PC-3 (cell line): ENCODE measurements at regions of chr10 and their contacts with region 1.

Region 1: DNA sequence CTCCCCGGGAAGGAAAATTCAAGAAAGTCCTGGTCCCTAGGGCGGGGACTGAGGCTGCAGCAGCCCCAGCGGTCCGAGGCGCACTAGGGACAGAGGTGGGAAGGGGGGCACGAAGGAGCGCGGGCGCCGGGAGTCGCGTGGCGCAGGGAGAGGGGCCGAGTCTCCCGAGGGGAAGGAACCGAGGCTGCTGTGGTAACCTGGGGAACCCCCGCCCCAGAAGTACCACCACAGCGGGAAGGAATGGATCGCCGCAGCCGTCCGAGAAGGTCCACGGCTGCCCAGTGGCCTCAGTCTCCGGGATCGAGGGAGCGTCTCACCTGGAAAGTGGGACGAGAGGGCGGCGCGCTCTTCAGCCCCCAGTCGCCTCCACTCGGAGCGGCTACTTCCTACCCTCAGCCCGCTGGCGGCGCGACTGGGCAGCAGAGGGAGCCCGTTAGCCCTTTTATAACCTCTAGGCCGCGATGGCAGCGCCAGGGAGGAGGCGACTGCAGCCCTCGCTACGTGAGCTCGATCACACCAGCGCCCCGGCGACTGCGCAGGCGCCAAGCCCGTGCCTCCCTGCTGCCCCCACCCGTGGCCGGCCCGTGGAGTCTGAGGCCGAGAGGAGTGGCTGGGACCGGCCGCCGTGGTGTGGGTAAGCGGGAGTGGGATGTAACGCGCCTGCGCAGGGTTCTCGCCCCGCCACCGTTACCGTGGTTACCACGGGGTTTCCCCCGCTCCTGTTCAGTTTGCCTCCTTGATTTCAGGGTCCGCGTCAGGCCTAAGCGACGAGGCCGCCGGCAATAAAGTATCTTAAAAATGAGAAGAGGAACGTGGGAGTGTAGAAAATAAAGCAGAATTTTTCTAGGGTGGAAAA is at the start of gene P4HA1:
- DNase-seq: peak; percentile 100
- ATAC-seq: peak; percentile 90
- H3K4me3 ChIP-seq: peak within 1 kb of the TSS; percentile 64
- H3K27ac ChIP-seq: peak within 1 kb of the TSS; percentile 34
- H3K4me1 ChIP-seq: peaks cover 20% of the 10 kb centered on the region
- H3K27me3 ChIP-seq: no peaks in the 10 kb centered on the region
- CTCF ChIP-seq: peak; percentile 99
- total RNA-seq, gene P4HA1: 164 and 181 TPM in 2 replicates

Region 2: GRCh38 chr10:72802763-72803505 is 293.7 kb before region 1 on chr10:
- CTCF ChIA-PET with region 1: no interaction called
- POLR2A ChIA-PET with region 1: no interaction called
- intact Hi-C with region 1: no loop called
- DNase-seq: peak; percentile 86
- ATAC-seq: peak; percentile 91
- H3K4me3 ChIP-seq: peak overlapping the region; percentile 32
- H3K27ac ChIP-seq: peak overlapping the region; percentile 0; the same call in 1 of the 2 replicates
- H3K4me1 ChIP-seq: peaks cover 33% of the 10 kb centered on the region
- H3K27me3 ChIP-seq: 0 out of 2 replicates have a peak, but pooled peaks cover 2% of the 10 kb centered on the region
- CTCF ChIP-seq: no peak

Region 3: GRCh38 chr10:72924351-72924750 is 172.3 kb before region 1 on chr10:
- CTCF ChIA-PET with region 1: no interaction called
- POLR2A ChIA-PET with region 1: interaction called, 12 read pairs
- intact Hi-C with region 1: no loop called
- DNase-seq: no peak
- ATAC-seq: no peak
- H3K4me3 ChIP-seq: no peak overlapping the region
- H3K27ac ChIP-seq: no peak overlapping the region
- H3K4me1 ChIP-seq: no peaks in the 10 kb centered on the region
- H3K27me3 ChIP-seq: peaks cover 72% of the 10 kb centered on the region
- CTCF ChIP-seq: no peak

Region 4: DNA sequence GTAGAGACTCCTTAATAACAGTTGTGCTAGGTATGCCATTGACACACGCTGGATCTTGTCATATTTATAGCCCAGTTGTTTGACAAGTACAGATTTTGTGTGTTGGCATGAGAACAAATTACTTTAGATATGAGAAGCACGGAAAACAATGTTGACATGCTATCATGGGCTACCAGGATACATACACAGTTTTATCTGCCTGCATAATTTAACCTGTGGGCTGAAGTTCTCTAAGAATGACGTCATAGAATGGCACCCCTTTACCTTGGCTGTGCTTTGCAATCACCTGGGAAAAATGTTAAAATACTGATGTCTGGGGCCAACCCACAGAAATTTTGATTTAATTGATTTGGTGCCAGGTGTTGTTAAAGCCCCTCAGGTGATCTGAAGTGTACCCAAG is 144.9 kb before region 1 on chr10:
- CTCF ChIA-PET with region 1: no interaction called
- POLR2A ChIA-PET with region 1: no interaction called
- intact Hi-C with region 1: no loop called
- DNase-seq: no peak
- ATAC-seq: no peak
- H3K4me3 ChIP-seq: no peak overlapping the region
- H3K27ac ChIP-seq: no peak overlapping the region
- H3K4me1 ChIP-seq: peaks cover 9% of the 10 kb centered on the region
- H3K27me3 ChIP-seq: peaks cover 26% of the 10 kb centered on the region
- CTCF ChIP-seq: no peak

Region 5: DNA sequence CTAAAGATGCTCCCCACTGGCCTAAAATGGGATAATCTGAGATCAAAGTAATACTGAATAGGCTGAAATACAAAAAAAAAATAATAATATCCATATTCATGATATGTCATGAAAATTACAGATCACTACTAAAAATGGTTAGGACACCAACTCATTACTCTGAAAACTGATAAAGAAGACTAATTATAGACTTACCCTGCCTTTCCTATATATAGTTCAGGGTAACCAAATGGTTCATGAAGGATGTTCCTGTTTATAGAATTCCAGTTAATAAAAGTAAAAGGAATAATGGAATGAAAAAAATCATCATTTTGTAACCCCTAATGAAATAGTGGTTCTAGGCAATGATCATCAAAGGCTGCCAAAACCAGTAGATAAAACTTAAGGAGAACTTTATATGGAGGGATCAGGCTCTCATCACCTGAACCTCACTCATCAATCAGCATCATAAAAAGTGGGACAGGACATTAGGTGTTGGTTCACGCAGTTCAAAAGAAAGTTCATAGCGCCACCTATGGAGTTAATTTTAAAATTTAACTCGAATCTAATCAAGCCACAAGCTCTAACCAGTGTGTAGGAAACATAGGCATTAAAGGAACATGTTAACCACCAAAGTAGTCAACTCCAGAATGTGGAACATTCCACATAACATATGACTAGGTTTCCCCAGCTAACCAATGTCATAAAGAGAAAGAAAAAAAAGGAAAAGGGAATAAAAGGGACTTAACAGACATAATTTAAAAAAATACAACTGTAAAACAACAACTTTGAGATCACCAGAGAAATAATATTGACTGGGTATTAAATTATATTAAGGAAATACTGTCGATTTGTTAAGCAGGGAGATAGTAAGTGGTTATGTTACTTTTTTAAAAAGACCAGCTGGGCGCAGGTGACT is 35.7 kb before region 1 on chr10:
- CTCF ChIA-PET with region 1: interaction called, 10 read pairs
- POLR2A ChIA-PET with region 1: interaction called, 3 read pairs
- intact Hi-C with region 1: no loop called
- DNase-seq: peak; percentile 98
- ATAC-seq: peak; percentile 95
- H3K4me3 ChIP-seq: no peak overlapping the region
- H3K27ac ChIP-seq: no peak overlapping the region
- H3K4me1 ChIP-seq: no peaks in the 10 kb centered on the region
- H3K27me3 ChIP-seq: no peaks in the 10 kb centered on the region
- CTCF ChIP-seq: peak; percentile 100

Region 6: DNA sequence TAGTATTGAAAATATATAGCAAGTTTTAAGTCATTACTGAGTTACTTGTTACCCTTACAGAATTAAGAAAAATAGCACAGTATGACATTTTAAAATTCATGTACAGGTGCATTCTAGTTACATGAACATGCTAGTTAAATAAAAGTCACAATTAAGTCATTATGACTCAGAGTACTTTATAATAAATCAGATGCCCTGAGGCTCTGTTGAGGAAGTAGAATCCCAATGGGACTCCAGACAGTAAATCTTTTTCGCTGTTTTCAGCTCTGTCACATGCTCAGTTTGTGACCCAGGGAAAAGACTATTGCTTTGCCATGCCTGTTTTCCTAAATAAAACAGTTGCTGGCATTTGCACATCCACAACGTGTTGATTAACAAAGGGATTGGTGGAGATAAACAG is 34.6 kb after region 1 on chr10:
- CTCF ChIA-PET with region 1: interaction called, 11 read pairs
- POLR2A ChIA-PET with region 1: interaction called, 13 read pairs
- intact Hi-C with region 1: loop called (anchors 1 kb)
- DNase-seq: peak; percentile 100
- ATAC-seq: peak; percentile 96
- H3K4me3 ChIP-seq: peak overlapping the region; percentile 1; the same call in 1 of the 2 replicates
- H3K27ac ChIP-seq: peak overlapping the region; percentile 72
- H3K4me1 ChIP-seq: peaks cover 29% of the 10 kb centered on the region
- H3K27me3 ChIP-seq: no peaks in the 10 kb centered on the region
- CTCF ChIP-seq: no peak

Region 7: GRCh38 chr10:73233883-73234282 is 137.2 kb after region 1 on chr10:
- CTCF ChIA-PET with region 1: interaction called, 3 read pairs
- POLR2A ChIA-PET with region 1: interaction called, 13 read pairs
- intact Hi-C with region 1: no loop called
- DNase-seq: no peak
- ATAC-seq: no peak
- H3K4me3 ChIP-seq: no peak overlapping the region
- H3K27ac ChIP-seq: no peak overlapping the region
- H3K4me1 ChIP-seq: no peaks in the 10 kb centered on the region
- H3K27me3 ChIP-seq: no peaks in the 10 kb centered on the region
- CTCF ChIP-seq: no peak

Region 8: GRCh38 chr10:73339436-73339835 is 242.8 kb after region 1 on chr10:
- CTCF ChIA-PET with region 1: no interaction called
- POLR2A ChIA-PET with region 1: interaction called, 13 read pairs
- intact Hi-C with region 1: no loop called
- DNase-seq: peak; percentile 77
- ATAC-seq: peak; percentile 59
- H3K4me3 ChIP-seq: no peak overlapping the region
- H3K27ac ChIP-seq: peak overlapping the region; percentile 15
- H3K4me1 ChIP-seq: peaks cover 18% of the 10 kb centered on the region
- H3K27me3 ChIP-seq: no peaks in the 10 kb centered on the region
- CTCF ChIP-seq: no peak

Region 9: GRCh38 chr10:73537288-73537687 is 440.6 kb after region 1 on chr10:
- CTCF ChIA-PET with region 1: no interaction called
- POLR2A ChIA-PET with region 1: no interaction called
- intact Hi-C with region 1: no loop called
- DNase-seq: no peak
- ATAC-seq: no peak; the same call in 1 of the 2 replicates
- H3K4me3 ChIP-seq: no peak overlapping the region
- H3K27ac ChIP-seq: no peak overlapping the region
- H3K4me1 ChIP-seq: no peaks in the 10 kb centered on the region
- H3K27me3 ChIP-seq: no peaks in the 10 kb centered on the region
- CTCF ChIP-seq: no peak

Region 10: DNA sequence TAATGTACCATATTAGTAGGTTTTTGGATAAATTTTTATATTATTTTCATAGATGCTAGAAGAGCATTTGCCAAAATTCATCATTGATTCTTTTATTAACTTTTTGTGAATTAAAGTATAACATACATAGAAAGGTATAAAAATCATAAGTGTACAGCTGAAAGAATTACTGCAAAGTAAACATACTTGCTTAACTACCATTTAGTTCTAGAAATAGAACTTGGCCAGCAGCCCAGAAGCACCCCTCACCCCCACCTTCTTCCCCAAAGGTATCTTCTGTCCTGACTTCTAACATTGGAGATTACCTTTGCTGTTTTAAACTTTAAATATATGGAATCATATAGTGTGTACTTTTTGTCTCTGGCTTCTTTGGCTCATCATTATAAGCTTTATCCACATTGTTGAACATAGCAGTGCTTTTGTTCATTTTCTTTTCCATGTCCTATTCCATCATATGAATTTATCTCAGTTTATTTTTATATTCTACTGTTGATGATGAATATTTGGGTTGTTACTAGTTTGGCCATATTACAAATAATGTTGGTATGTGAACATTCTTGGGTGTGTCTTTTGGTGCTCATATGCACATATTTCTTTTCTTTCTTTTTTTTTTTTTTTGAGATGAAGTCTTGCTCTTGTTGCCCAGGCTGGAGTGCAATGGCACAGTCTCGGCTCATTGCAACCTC is 1197.2 kb after region 1 on chr10:
- CTCF ChIA-PET with region 1: no interaction called
- POLR2A ChIA-PET with region 1: no interaction called
- intact Hi-C with region 1: no loop called
- DNase-seq: peak; percentile 100
- ATAC-seq: peak; percentile 80
- H3K4me3 ChIP-seq: peak overlapping the region; percentile 27
- H3K27ac ChIP-seq: peak overlapping the region; percentile 66
- H3K4me1 ChIP-seq: peaks cover 46% of the 10 kb centered on the region
- H3K27me3 ChIP-seq: no peaks in the 10 kb centered on the region
- CTCF ChIP-seq: no peak